Natural killer cell (primary cell): ENCODE measurements at regions of chr10 and their contacts with region 1.

Region 1: DNA sequence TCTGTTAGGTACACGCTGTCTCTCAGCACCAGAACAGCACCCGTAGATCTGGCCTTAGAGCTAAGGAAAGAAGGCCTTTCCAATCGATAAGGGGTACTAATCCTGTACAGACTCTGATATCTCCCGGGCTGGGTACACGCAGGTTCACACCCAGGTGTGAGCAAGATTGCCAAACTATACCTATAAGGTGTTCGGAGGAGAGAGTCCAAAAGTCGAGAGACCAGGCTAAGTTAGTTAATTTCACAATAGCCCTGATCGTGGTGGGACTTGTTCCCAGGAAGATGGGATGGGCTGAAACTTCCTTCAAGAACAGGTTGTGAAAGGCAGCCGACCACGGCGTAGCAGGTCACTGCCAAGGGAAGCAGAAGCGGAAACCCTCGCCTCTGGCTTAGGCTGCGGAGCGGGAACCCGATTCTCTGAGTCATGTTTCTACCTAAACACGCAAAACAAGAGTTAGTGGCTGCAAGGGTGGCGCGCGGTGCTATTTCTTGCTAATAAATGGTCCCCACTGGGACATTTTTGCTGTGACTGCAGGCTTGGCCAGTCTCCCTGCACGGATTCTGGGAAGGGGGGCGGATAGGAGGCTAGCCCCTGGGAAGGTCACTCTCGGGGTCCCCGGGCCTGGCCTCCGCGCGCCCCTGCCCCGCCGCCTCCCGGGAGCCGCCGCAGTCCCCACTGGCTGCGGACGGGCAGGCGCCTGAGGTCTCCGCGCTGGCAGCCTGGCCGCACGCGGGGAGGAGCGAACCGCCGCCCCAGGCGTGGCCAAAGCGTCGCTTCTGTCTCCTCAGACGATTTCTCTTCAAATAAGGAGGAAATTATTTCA is 75.4 kb upstream of the PDSS1 start:
- DNase-seq: peak in 1 of 2 donors; percentile 35
- ATAC-seq: peak; percentile 52 to 78 (median 57)
- H3K4me3 ChIP-seq: no peak overlapping the region
- H3K4me3 Mint-ChIP-seq: peak overlapping the region; percentile 41
- H3K27ac ChIP-seq: no peak overlapping the region
- H3K27ac Mint-ChIP-seq: no peak overlapping the region
- H3K4me1 ChIP-seq: peaks cover 14% of the 10 kb centered on the region
- H3K4me1 Mint-ChIP-seq: no peaks in the 10 kb centered on the region
- H3K27me3 ChIP-seq: peaks cover 11% of the 10 kb centered on the region
- H3K27me3 Mint-ChIP-seq: peaks cover 39 to 47% of the 10 kb centered on the region in 2 donors
- CTCF ChIP-seq: no peak

Region 2: DNA sequence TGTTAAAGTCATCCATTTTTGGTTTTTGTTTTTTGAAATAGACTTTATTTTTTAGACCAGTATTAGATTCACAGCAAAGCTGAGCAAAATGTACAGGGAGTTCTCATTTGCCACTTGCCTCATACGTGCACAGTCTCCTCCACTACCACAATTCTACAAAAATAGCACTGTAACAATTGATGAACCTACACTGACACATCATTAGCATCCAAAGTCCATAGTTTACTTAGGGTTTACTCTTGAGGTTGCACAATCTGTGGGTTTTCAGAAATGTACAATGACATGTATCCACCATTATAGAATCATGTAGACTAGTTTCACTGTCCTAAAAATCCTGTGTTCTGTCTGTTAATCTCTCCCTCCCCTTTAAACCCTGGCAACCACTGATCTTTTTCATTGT is 50.4 kb before region 1 on chr10:
- intact Hi-C with region 1: loop called (anchors 1 kb)
- DNase-seq: no peak
- ATAC-seq: no peak
- H3K4me3 ChIP-seq: no peak overlapping the region
- H3K4me3 Mint-ChIP-seq: no peak overlapping the region
- H3K27ac ChIP-seq: no peak overlapping the region
- H3K27ac Mint-ChIP-seq: peak overlapping the region; percentile 10 to 14
- H3K4me1 ChIP-seq: no peaks in the 10 kb centered on the region
- H3K4me1 Mint-ChIP-seq: peaks cover 12 to 19% of the 10 kb centered on the region in 2 donors
- H3K27me3 ChIP-seq: no peaks in the 10 kb centered on the region
- H3K27me3 Mint-ChIP-seq: no peaks in the 10 kb centered on the region
- CTCF ChIP-seq: no peak